ENCODE measurements at regions of chr21 and their contacts with region 1.

Region 1: DNA sequence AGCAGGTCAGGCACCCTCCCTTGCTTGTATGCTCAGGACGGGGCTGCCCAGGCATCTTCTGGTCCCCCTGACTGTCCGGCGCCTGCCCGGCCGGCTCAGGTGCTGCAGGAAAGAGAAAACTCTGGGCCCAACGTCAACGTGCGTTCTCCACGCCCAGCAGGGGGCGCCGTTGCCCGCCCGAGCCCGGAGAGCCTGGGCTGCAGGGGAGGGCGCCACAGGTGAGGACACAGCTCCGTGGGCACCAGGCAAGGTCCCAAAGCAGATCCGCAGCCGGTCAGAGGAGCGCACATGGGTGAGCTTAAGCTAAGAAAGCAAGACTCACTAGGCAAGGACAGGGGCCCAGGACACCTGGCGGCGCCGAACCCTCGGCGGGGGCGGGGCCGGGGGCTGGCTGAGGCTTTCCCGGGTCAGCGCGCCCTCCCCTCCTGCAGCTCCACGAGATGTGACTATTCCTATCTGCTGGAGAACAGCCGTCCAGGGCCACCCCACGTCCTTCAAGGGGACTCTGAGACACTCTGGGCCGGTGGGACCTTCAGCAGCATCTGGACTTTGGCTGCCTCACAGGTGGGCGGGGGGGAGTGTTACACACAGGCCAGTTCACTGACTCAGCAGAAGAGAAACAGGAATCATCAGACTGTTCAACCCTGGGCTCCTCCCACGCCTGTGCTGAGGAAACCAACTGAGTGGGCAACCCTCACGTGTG is 29.3 kb downstream of the KRTAP10-1 start:
- DNase-seq: peak; percentile 74 to 86 (median 80)
- H3K4me3 ChIP-seq: peak overlapping the region; percentile 54
- H3K4me3 Mint-ChIP-seq: peak overlapping the region; percentile 40 to 64 (median 52)
- H3K27ac ChIP-seq: no peak overlapping the region
- H3K27ac Mint-ChIP-seq: no peak overlapping the region
- H3K4me1 ChIP-seq: peaks cover 11% of the 10 kb centered on the region
- H3K4me1 Mint-ChIP-seq: peaks cover 0 to 6% (median 0%) of the 10 kb centered on the region in 3 donors
- H3K27me3 ChIP-seq: no peaks in the 10 kb centered on the region
- H3K27me3 Mint-ChIP-seq: peaks cover 0 to 2% of the 10 kb centered on the region in 2 donors

Region 2: GRCh38 chr21:44331650-44332307 is 178.9 kb before region 1 on chr21:
- CTCF ChIA-PET with region 1: no interaction called
- POLR2A ChIA-PET with region 1: no interaction called
- DNase-seq: no peak
- H3K4me3 ChIP-seq: no peak overlapping the region
- H3K4me3 Mint-ChIP-seq: no peak overlapping the region
- H3K27ac ChIP-seq: no peak overlapping the region
- H3K27ac Mint-ChIP-seq: peak overlapping the region in 2 of 8 donors; percentile 54 to 79
- H3K4me1 ChIP-seq: no peaks in the 10 kb centered on the region
- H3K4me1 Mint-ChIP-seq: peaks cover 0 to 1% (median 0%) of the 10 kb centered on the region in 3 donors
- H3K27me3 ChIP-seq: no peaks in the 10 kb centered on the region
- H3K27me3 Mint-ChIP-seq: no peaks in the 10 kb centered on the region

Region 3: DNA sequence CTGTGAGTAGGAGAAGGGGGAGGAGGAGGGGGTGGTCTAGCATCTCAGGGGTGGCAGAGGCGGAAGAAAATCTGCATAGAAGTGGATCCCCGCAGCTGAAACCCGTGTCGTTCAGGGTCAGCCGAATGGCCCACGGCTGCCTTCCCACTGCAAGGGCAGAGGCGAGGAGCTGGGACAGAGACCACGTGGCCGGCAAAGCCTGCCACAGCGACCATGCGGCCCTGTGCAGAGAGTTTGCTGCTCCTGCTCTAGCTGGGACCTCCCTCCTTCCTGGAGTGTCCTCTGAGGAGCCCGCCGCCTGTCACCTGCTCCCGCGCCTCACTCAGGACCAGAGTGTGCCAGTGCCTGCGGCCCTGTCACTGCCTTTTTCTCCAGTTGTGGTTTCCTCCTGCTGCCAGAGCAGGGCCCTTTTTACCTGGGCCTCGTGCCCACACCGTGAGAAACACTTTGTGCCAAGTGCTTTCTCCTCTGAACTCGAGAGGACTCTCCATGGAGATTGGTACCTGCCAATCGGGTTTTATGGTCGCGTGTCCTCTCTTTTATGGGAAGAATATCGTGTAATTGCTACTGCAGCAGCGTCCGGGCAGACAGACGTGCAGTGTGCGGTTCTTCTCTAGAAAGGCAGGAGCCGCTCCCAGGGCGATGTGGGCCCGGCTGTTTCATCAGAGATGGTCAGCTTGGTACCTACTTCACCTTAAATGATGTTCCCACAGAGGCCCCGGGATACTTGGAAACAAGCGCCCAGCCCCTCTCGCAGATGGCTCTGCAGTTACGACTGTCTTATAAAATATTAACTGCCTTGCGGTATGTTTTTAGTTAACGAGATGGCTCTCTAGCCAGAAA is 162.5 kb before region 1 on chr21:
- CTCF ChIA-PET with region 1: no interaction called
- POLR2A ChIA-PET with region 1: no interaction called
- DNase-seq: no peak
- H3K4me3 ChIP-seq: no peak overlapping the region
- H3K4me3 Mint-ChIP-seq: no peak overlapping the region
- H3K27ac ChIP-seq: no peak overlapping the region
- H3K27ac Mint-ChIP-seq: no peak overlapping the region
- H3K4me1 ChIP-seq: peaks cover 10% of the 10 kb centered on the region
- H3K4me1 Mint-ChIP-seq: peaks cover 10 to 17% (median 14%) of the 10 kb centered on the region in 3 donors
- H3K27me3 ChIP-seq: peaks cover 4% of the 10 kb centered on the region
- H3K27me3 Mint-ChIP-seq: peaks cover 7 to 16% of the 10 kb centered on the region in 2 donors

Region 4: GRCh38 chr21:44547656-44548331 is 37.1 kb after region 1 on chr21:
- CTCF ChIA-PET with region 1: interaction called, 16 read pairs
- POLR2A ChIA-PET with region 1: no interaction called
- DNase-seq: peak in 2 of 5 donors; percentile 43 to 65
- H3K4me3 ChIP-seq: peak overlapping the region; percentile 35
- H3K4me3 Mint-ChIP-seq: peak overlapping the region in 6 of 7 donors; percentile 74 to 84 (median 81)
- H3K27ac ChIP-seq: no peak overlapping the region
- H3K27ac Mint-ChIP-seq: peak overlapping the region; percentile 79 to 96 (median 90)
- H3K4me1 ChIP-seq: peaks cover 21% of the 10 kb centered on the region
- H3K4me1 Mint-ChIP-seq: peaks cover 29 to 35% (median 30%) of the 10 kb centered on the region in 3 donors
- H3K27me3 ChIP-seq: no peaks in the 10 kb centered on the region
- H3K27me3 Mint-ChIP-seq: peaks cover 0 to 4% of the 10 kb centered on the region in 2 donors

Region 5: GRCh38 chr21:44742418-44743153 is 231.9 kb after region 1 on chr21:
- CTCF ChIA-PET with region 1: interaction called, 134 read pairs
- POLR2A ChIA-PET with region 1: interaction called, 3 read pairs
- DNase-seq: peak in 2 of 5 donors; percentile 28 to 33
- H3K4me3 ChIP-seq: no peak overlapping the region
- H3K4me3 Mint-ChIP-seq: no peak overlapping the region
- H3K27ac ChIP-seq: no peak overlapping the region
- H3K27ac Mint-ChIP-seq: peak overlapping the region in 5 of 8 donors; percentile 33 to 77 (median 52)
- H3K4me1 ChIP-seq: no peaks in the 10 kb centered on the region
- H3K4me1 Mint-ChIP-seq: peaks cover 2 to 8% (median 7%) of the 10 kb centered on the region in 3 donors
- H3K27me3 ChIP-seq: no peaks in the 10 kb centered on the region
- H3K27me3 Mint-ChIP-seq: no peaks in the 10 kb centered on the region

Region 6: DNA sequence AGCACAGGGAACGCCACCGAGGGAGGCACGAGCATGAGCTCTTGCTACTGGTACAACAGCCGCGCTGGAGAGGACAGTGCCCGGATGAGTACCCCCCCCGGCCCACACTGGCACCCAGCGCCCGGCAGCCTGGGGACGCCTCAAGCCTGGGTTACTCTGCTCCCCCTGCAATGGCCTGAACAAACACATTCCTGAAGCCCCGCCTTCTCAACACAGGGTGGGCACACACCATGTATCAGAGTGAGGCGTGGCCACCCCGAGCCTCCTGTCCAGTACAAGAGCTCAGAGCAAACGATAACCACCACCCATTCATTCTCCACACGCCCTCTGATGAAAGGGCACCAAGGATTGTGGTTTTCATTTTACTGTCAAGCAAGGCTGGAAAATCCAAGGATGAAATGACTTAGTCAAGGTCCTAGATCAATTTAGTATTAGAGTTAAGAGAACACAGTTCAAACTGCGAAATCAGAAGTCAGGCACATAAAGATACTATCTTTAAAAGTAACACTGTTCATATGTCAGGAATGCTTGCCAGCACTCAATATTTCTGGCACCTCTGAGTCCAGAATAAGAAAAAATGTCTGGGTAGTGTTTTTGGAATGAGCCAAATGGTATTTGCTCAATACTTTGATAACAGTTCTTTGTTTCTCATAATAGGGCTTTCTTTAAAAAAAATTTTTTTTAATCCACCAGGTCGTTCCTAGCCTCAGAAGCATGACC is 268.9 kb after region 1 on chr21:
- CTCF ChIA-PET with region 1: interaction called, 10 read pairs
- POLR2A ChIA-PET with region 1: no interaction called
- DNase-seq: no peak
- H3K4me3 ChIP-seq: no peak overlapping the region
- H3K4me3 Mint-ChIP-seq: no peak overlapping the region
- H3K27ac ChIP-seq: no peak overlapping the region
- H3K27ac Mint-ChIP-seq: peak overlapping the region in 1 of 8 donors; percentile 78
- H3K4me1 ChIP-seq: no peaks in the 10 kb centered on the region
- H3K4me1 Mint-ChIP-seq: peaks cover 20 to 32% (median 26%) of the 10 kb centered on the region in 3 donors
- H3K27me3 ChIP-seq: no peaks in the 10 kb centered on the region
- H3K27me3 Mint-ChIP-seq: peaks cover 0 to 1% of the 10 kb centered on the region in 2 donors

Region 7: GRCh38 chr21:44801468-44802395 is 291.1 kb after region 1 on chr21 and contains the start of gene UBE2G2:
- CTCF ChIA-PET with region 1: interaction called, 16 read pairs
- POLR2A ChIA-PET with region 1: no interaction called
- DNase-seq: peak; percentile 77 to 89 (median 83)
- H3K4me3 ChIP-seq: peak within 1 kb of the TSS; percentile 68
- H3K4me3 Mint-ChIP-seq: peak within 1 kb of the TSS; percentile 94 to 99 (median 98)
- H3K27ac ChIP-seq: peak within 1 kb of the TSS; percentile 55
- H3K27ac Mint-ChIP-seq: peak within 1 kb of the TSS; percentile 88 to 98 (median 94)
- H3K4me1 ChIP-seq: peaks cover 28% of the 10 kb centered on the region
- H3K4me1 Mint-ChIP-seq: peaks cover 32 to 54% (median 44%) of the 10 kb centered on the region in 3 donors
- H3K27me3 ChIP-seq: no peaks in the 10 kb centered on the region
- H3K27me3 Mint-ChIP-seq: no peaks in the 10 kb centered on the region
- total RNA-seq, gene UBE2G2: 112 to 116 TPM

Measured in CD8-positive, alpha-beta memory T cell (primary cell).